ENCODE measurements at regions of chr4 and their contacts with region 1.

Region 1: GRCh38 chr4:145936142-145936996 is 2.3 kb downstream of the ZNF827 start:
- DNase-seq: no peak
- ATAC-seq: peak; percentile 70
- H3K4me3 ChIP-seq: peak overlapping the region; percentile 93
- H3K27ac ChIP-seq: peak overlapping the region; percentile 88
- H3K4me1 ChIP-seq: no peaks in the 10 kb centered on the region
- H3K27me3 ChIP-seq: no peaks in the 10 kb centered on the region
- CTCF ChIP-seq: peak; percentile 2 to 34 (median 19); a peak in 1 of 6 replicates
- EP300 ChIP-seq: no peak
- POLR2A ChIP-seq: peak; percentile 68; the same call in 1 of the 2 replicates
- RAD21 ChIP-seq: 0 out of 2 replicates have a peak, but pooled peaks have one; percentile 17

Region 2: DNA sequence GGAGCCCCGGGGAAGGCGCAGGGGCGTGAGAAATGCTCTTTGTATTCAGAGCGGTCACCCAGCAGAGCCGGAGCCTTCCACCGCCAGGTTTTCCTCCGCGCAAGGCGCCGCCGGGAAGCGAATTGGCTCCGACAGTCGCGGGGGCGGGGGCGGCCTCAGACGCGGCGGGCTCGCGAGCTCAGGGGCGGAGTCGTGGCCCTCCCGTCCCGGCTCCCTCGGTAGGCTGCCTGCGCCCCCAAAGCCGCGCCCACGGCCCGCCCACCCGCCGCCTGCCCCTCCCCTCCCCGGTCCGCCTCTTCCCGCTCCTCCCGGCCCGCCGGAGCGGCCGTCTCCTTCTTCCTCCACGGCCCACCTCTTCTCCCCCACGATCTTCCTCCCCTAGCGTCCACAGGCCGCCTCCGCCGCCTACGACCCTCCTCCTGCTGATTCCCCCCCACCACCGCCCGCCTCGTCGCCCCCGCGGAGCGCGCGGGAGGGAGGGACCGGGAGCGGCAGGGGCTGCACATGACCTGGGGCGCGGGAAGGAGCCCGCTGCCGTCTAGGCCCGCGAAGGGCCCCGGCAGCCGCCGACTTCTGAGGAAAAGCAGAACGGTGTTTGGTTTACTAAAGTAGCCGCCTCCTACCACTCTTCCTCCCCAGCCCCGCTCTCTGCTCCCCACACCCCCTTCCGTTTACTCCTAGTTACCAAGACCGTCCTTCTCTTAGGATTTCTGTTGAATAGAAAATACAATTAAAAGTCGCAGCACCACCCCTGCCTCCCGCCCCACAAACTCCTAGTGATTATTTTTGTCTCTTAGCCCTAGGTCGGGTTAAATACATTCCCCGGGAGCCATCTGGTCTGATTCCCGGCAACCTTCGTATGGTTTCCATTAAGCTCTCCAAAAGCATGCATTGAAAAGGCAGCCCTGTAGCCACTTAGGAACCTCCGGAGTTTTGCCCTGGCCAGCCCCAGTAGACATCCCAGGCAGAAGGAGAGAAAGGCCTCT is 203.2 kb before region 1 on chr4:
- CTCF ChIA-PET with region 1: no interaction called
- POLR2A ChIA-PET with region 1: no interaction called
- RAD21 ChIA-PET with region 1: no interaction called
- SMC1A ChIA-PET with region 1: no interaction called
- in situ Hi-C with region 1: no loop called
- intact Hi-C with region 1: loop called (anchors 5 kb)
- DNase-seq: peak; percentile 35
- ATAC-seq: peak; percentile 95
- H3K4me3 ChIP-seq: peak overlapping the region; percentile 85
- H3K27ac ChIP-seq: peak overlapping the region; percentile 6; the same call in 1 of the 2 replicates
- H3K4me1 ChIP-seq: peaks cover 16% of the 10 kb centered on the region
- H3K27me3 ChIP-seq: no peaks in the 10 kb centered on the region; a peak in 1 of 4 replicates
- CTCF ChIP-seq: no peak
- EP300 ChIP-seq: no peak
- POLR2A ChIP-seq: peak; percentile 47; the same call in 1 of the 2 replicates
- RAD21 ChIP-seq: no peak

Region 3: DNA sequence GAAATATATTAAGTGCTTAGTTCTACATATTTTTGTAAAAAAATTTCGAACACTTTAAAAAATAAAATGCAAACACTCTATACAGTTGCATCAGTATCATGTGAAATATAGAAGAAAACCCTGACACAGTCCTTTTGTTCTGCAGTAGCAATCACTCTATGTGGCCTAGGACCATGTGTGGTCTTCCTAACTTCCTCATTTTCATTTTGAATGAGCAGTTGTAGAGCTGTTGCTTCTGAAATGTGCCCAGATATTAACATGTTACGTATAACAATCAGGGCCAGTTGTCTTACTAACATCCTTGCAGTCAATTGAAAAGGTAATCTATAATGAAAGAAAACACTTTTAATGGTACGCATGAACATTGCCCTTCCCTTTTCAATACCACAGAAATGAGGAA is 105.7 kb before region 1 on chr4:
- CTCF ChIA-PET with region 1: no interaction called
- POLR2A ChIA-PET with region 1: interaction called, 3 read pairs
- RAD21 ChIA-PET with region 1: interaction called, 3 read pairs
- SMC1A ChIA-PET with region 1: interaction called, 3 read pairs
- in situ Hi-C with region 1: no loop called
- intact Hi-C with region 1: loop called (anchors 2 kb)
- DNase-seq: no peak
- ATAC-seq: peak; percentile 79
- H3K4me3 ChIP-seq: 0 out of 2 replicates have a peak overlapping the region, but pooled peaks have one; percentile 16
- H3K27ac ChIP-seq: peak overlapping the region; percentile 77
- H3K4me1 ChIP-seq: peaks cover 30% of the 10 kb centered on the region
- H3K27me3 ChIP-seq: no peaks in the 10 kb centered on the region
- CTCF ChIP-seq: no peak
- EP300 ChIP-seq: 0 out of 4 replicates have a peak, but pooled peaks of 1 of the 2 experiments have one; percentile 20
- POLR2A ChIP-seq: no peak
- RAD21 ChIP-seq: no peak

Region 4: GRCh38 chr4:145909281-145909715 is 27.1 kb before region 1 on chr4:
- CTCF ChIA-PET with region 1: no interaction called
- POLR2A ChIA-PET with region 1: interaction called, 12 read pairs
- RAD21 ChIA-PET with region 1: interaction called, 3 read pairs
- SMC1A ChIA-PET with region 1: interaction called, 3 read pairs
- in situ Hi-C with region 1: no loop called
- intact Hi-C with region 1: no loop called
- DNase-seq: no peak
- ATAC-seq: peak; percentile 85
- H3K4me3 ChIP-seq: no peak overlapping the region
- H3K27ac ChIP-seq: no peak overlapping the region
- H3K4me1 ChIP-seq: peaks cover 5% of the 10 kb centered on the region; the same call in 1 of the 2 replicates
- H3K27me3 ChIP-seq: no peaks in the 10 kb centered on the region
- CTCF ChIP-seq: no peak
- EP300 ChIP-seq: no peak
- POLR2A ChIP-seq: no peak
- RAD21 ChIP-seq: no peak

Region 5: DNA sequence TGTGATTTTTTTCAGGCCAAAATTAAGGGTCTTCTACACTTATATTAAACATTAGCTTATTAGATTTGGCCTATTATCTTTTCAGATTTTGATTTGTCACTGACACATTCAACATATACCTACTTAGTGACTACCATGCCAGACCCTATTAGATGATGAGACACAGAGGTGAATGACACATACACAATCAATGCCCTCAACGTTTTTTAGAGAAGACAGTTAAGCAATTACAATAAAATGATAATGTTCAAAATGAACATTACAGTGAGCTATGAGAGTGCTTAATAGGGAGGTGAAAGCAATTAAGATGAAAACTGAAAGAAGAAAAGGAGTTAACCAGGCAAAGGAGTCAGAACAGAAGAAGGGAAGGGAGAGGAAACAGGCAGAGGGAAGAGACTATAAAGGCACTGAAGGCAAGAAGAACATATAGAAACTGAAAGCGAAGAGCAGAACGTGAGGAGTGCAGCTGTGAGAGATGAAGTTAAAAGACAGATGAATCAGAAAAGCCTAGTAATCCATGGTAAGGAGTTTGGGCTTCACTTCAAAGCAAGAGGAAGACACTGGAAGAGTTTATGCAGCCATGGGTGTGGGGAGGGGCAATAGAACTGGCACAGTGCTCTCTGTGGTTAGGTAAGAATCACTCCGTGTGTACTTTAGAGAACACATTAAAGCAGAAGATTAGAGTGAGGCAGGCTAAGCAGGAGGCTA is 397.0 kb after region 1 on chr4:
- CTCF ChIA-PET with region 1: no interaction called
- POLR2A ChIA-PET with region 1: no interaction called
- RAD21 ChIA-PET with region 1: no interaction called
- SMC1A ChIA-PET with region 1: no interaction called
- in situ Hi-C with region 1: no loop called
- intact Hi-C with region 1: loop called (anchors 10 kb)
- DNase-seq: peak; percentile 59
- ATAC-seq: peak; percentile 88
- H3K4me3 ChIP-seq: peak overlapping the region; percentile 54
- H3K27ac ChIP-seq: peak overlapping the region; percentile 38
- H3K4me1 ChIP-seq: peaks cover 13% of the 10 kb centered on the region; the same call in 1 of the 2 replicates
- H3K27me3 ChIP-seq: no peaks in the 10 kb centered on the region
- CTCF ChIP-seq: no peak
- EP300 ChIP-seq: no peak
- POLR2A ChIP-seq: no peak
- RAD21 ChIP-seq: no peak